Activated CD8-positive, alpha-beta T cell treated with anti-CD3 and anti-CD28 coated beads, Interleukin-2, amount 10 ng/mL, durations not matched to agents 7 days and 5 days (primary cell): ENCODE measurements at regions of chr9 and their contacts with region 1.

Region 1: GRCh38 chr9:128902351-128903078 is 18.3 kb upstream of the PHYHD1 start:
- DNase-seq: peak; percentile 95
- ATAC-seq: peak; percentile 89
- H3K4me3 Mint-ChIP-seq: peak overlapping the region; percentile 77
- H3K27ac Mint-ChIP-seq: peak overlapping the region; percentile 93
- H3K4me1 Mint-ChIP-seq: peaks cover 69% of the 10 kb centered on the region
- H3K27me3 Mint-ChIP-seq: no peaks in the 10 kb centered on the region

Region 2: DNA sequence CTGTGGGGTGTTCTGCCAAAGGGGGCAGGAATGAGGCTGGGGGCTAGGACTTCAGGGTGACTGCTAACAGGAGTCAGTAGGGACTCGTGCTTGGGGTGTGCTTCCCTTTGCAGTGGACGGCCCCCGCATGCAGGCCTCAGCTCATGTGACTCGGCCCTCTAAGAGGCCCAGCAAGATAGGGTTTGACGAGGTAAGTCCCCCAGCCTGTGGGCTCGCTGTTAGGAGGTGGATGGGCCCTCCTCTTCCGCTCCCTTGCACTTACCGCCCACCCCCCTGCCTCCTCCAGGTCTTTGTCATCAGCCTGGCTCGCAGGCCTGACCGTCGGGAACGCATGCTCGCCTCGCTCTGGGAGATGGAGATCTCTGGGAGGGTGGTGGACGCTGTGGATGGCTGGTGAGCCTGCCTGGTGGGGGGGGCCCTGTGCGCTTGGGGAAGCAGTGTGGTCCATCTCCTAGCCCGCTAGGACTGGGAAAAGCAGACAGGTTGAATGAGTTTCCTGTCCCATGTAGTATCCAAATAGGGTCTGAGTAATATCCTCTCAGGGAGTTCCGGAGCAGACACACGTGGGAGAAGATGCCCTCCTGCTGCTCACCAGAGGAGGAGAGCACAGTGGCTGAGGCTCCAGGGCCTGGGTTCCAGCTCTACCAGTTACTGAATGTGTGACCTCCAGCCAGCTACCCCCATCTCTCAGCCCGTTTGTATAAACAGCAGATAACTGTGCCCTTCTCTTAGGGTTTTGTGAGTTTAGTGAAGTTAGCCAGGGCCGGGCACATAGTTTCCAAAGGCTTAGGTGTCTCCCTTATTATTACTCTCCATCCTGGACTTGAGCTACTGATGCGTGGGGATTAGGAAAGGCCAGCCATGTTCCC is 473.6 kb before region 1 on chr9:
- CTCF ChIA-PET with region 1: no interaction called
- POLR2A ChIA-PET with region 1: no interaction called
- DNase-seq: no peak
- ATAC-seq: no peak
- H3K4me3 Mint-ChIP-seq: no peak overlapping the region
- H3K27ac Mint-ChIP-seq: no peak overlapping the region
- H3K4me1 Mint-ChIP-seq: no peaks in the 10 kb centered on the region
- H3K27me3 Mint-ChIP-seq: no peaks in the 10 kb centered on the region

Region 3: DNA sequence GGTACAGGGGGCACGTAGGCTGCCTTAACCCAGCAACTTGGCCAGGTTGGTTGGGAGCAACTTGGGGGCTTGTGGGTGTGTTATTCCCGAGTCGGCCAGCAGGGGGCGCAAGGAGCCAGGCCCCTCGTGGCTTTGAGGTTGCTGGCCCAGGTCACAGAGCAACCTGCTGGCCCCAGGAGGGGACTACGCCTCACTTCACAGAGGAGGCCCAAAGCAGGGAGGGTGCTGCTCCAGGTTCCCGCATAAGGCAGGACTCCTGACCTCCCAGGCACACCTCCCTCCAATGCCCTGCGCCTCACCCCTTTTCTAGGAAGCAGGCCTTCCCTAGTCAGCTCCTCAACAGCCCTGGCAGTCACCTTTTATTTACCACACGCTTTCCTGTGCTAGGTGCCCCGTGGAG is 38.9 kb before region 1 on chr9:
- CTCF ChIA-PET with region 1: no interaction called
- POLR2A ChIA-PET with region 1: no interaction called
- DNase-seq: peak; percentile 91
- ATAC-seq: peak; percentile 98
- H3K4me3 Mint-ChIP-seq: no peak overlapping the region
- H3K27ac Mint-ChIP-seq: no peak overlapping the region
- H3K4me1 Mint-ChIP-seq: peaks cover 11% of the 10 kb centered on the region
- H3K27me3 Mint-ChIP-seq: no peaks in the 10 kb centered on the region

Region 4: DNA sequence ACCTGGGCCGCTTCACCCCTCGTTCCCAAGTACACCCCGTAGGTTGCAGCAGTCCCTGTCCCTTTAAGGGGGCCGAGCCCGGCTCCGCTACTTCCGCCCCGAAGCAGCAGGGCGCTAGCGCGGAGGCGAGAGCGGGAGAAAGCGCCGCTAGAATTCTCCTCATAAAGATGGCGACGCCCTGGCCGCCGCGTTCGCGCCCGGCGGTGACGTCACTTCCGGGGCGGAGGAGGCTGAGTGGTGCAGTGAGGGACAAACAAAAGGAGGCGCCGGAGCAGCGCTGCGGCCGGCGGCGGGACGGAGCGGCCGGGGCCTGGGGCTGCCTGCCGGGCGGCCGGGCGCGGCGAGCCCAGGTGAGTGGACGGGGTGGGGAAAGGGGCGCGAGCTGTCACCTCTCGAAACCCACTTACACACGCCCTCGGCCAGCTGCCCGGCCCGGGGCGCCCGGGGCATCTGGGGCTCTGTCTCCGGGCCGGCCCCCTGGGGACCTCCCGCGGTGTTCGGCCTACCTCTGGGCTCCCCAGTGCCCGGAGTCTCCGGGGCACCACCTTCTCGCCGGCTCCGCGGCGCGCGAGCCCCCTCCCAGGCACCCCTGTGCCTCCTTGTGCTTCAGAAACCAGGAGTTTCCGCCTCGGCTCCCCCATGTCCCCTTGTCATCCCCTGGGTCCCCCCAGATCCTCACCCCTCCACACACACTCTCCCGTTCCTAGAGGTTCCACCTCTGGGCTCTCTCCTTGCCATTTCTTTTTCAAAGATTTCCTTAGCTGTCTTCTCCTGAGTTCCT is 20.4 kb before region 1 on chr9 and contains the starts of genes KYAT1 and LRRC8A:
- CTCF ChIA-PET with region 1: interaction called, 7 read pairs
- POLR2A ChIA-PET with region 1: interaction called, 20 read pairs
- DNase-seq: peak; percentile 99
- ATAC-seq: peak; percentile 96
- H3K4me3 Mint-ChIP-seq: peak within 1 kb of the TSS; percentile 96
- H3K27ac Mint-ChIP-seq: peak within 1 kb of the TSS; percentile 91
- H3K4me1 Mint-ChIP-seq: peaks cover 53% of the 10 kb centered on the region
- H3K27me3 Mint-ChIP-seq: no peaks in the 10 kb centered on the region
- total RNA-seq, gene KYAT1: 12.6 to 13.0 TPM
- total RNA-seq, gene LRRC8A: 26.1 to 27.2 TPM